ENCODE measurements at regions of chr17 and their contacts with region 1.

Region 1: GRCh38 chr17:77096570-77097214 is 44.1 kb upstream of the SEC14L1 start:
- DNase-seq: peak in 2 of 9 experiments; percentile 51 to 69
- ATAC-seq: peak; percentile 64
- H3K4me3 ChIP-seq: no peak overlapping the region
- H3K4me3 Mint-ChIP-seq: peak overlapping the region; percentile 13
- H3K27ac ChIP-seq: no peak overlapping the region
- H3K27ac Mint-ChIP-seq: peak overlapping the region; percentile 96
- H3K4me1 ChIP-seq: peaks cover 28% of the 10 kb centered on the region
- H3K4me1 Mint-ChIP-seq: peaks cover 44% of the 10 kb centered on the region
- H3K27me3 ChIP-seq: no peaks in the 10 kb centered on the region
- H3K27me3 Mint-ChIP-seq: no peaks in the 10 kb centered on the region
- CTCF ChIP-seq: peak; percentile 76

Region 2: GRCh38 chr17:77127735-77128361 is 31.2 kb after region 1 on chr17:
- CTCF ChIA-PET with region 1: no interaction called
- POLR2A ChIA-PET with region 1: no interaction called
- intact Hi-C with region 1: loop called in 1 of 2 experiments (anchors 2 kb)
- DNase-seq: peak; percentile 37 to 93 (median 73)
- ATAC-seq: peak; percentile 89
- H3K4me3 ChIP-seq: peak overlapping the region; percentile 35 to 38
- H3K4me3 Mint-ChIP-seq: peak overlapping the region; percentile 65
- H3K27ac ChIP-seq: peak overlapping the region; percentile 56 to 81
- H3K27ac Mint-ChIP-seq: peak overlapping the region; percentile 93
- H3K4me1 ChIP-seq: peaks cover 22% of the 10 kb centered on the region
- H3K4me1 Mint-ChIP-seq: peaks cover 23% of the 10 kb centered on the region
- H3K27me3 ChIP-seq: no peaks in the 10 kb centered on the region
- H3K27me3 Mint-ChIP-seq: no peaks in the 10 kb centered on the region
- CTCF ChIP-seq: no peak

Region 3: DNA sequence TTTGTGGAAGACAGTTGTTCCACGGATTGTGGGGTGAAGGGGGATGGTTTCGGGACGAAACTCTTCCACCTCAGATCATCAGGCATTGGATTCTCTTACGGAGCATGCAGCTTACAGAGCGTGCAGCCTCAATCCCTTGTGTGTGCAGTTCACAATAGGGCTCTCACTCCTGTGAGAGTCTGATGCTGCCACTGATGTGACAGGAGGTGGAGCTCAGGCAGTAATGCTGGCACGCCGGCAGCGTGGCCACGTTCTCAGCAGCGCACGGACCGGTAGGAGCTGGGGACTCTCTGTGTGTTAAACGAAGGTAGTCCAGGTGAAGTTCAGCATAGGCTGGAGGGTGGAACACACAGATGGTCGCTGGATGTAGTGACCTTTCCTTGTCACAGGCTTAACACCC is 81.9 kb after region 1 on chr17:
- CTCF ChIA-PET with region 1: no interaction called
- POLR2A ChIA-PET with region 1: no interaction called
- intact Hi-C with region 1: no loop called
- DNase-seq: no peak
- ATAC-seq: no peak
- H3K4me3 ChIP-seq: no peak overlapping the region
- H3K4me3 Mint-ChIP-seq: no peak overlapping the region
- H3K27ac ChIP-seq: no peak overlapping the region
- H3K27ac Mint-ChIP-seq: no peak overlapping the region
- H3K4me1 ChIP-seq: peaks cover 20% of the 10 kb centered on the region
- H3K4me1 Mint-ChIP-seq: peaks cover 50% of the 10 kb centered on the region
- H3K27me3 ChIP-seq: no peaks in the 10 kb centered on the region
- H3K27me3 Mint-ChIP-seq: no peaks in the 10 kb centered on the region
- CTCF ChIP-seq: no peak

Region 4: DNA sequence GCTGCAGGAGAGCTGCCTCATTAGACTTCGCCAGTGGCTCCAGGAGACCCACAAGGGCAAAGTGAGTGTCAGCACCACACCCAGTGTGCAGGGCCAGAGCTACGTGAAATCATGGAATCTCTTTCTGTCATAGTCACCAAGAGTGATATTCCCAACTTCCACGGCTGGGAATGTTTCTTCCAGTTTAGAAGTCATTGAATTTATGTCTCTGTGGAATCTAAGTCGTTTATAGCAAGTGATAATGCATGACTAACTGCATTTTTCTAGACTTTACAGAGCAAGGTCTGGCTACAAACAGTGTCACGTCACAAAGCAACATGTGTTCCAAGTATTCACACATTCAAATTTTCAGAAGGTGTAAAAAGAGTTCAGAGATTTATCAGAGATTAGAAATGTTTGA is 99.6 kb after region 1 on chr17:
- CTCF ChIA-PET with region 1: no interaction called
- POLR2A ChIA-PET with region 1: no interaction called
- intact Hi-C with region 1: loop called in 1 of 2 experiments (anchors 5 kb)
- DNase-seq: no peak
- ATAC-seq: no peak
- H3K4me3 ChIP-seq: no peak overlapping the region
- H3K4me3 Mint-ChIP-seq: no peak overlapping the region
- H3K27ac ChIP-seq: no peak overlapping the region
- H3K27ac Mint-ChIP-seq: no peak overlapping the region
- H3K4me1 ChIP-seq: no peaks in the 10 kb centered on the region
- H3K4me1 Mint-ChIP-seq: no peaks in the 10 kb centered on the region
- H3K27me3 ChIP-seq: no peaks in the 10 kb centered on the region
- H3K27me3 Mint-ChIP-seq: no peaks in the 10 kb centered on the region
- CTCF ChIP-seq: no peak

Region 5: DNA sequence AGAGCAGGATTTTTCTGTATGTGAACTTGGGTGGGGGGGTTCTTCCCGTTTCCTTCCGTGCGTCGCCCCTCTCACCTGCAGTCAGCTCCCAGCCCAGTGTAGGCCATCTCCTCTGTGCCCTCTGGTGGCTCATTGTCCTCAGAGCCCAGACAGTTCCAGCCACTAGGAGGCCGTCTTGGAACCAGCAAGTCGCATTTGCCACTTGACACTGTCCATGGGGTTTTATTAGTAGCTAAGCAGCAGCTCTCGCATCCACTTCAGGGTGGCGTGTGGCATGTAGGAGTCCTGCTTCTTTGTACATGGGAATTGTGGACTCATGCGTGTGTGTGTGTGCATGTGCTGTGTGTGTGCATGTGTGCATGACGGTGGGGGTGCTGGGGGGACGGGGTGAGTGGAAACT is 118.1 kb after region 1 on chr17:
- CTCF ChIA-PET with region 1: interaction called, 3 read pairs
- POLR2A ChIA-PET with region 1: no interaction called
- intact Hi-C with region 1: loop called in 1 of 2 experiments (anchors 1 kb)
- DNase-seq: peak in 4 of 9 experiments; percentile 21 to 47 (median 28)
- ATAC-seq: peak; percentile 55
- H3K4me3 ChIP-seq: no peak overlapping the region
- H3K4me3 Mint-ChIP-seq: no peak overlapping the region
- H3K27ac ChIP-seq: no peak overlapping the region
- H3K27ac Mint-ChIP-seq: no peak overlapping the region
- H3K4me1 ChIP-seq: no peaks in the 10 kb centered on the region
- H3K4me1 Mint-ChIP-seq: no peaks in the 10 kb centered on the region
- H3K27me3 ChIP-seq: no peaks in the 10 kb centered on the region
- H3K27me3 Mint-ChIP-seq: no peaks in the 10 kb centered on the region
- CTCF ChIP-seq: no peak

Region 6: GRCh38 chr17:77247048-77247541 is 150.4 kb after region 1 on chr17:
- CTCF ChIA-PET with region 1: interaction called, 3 read pairs
- POLR2A ChIA-PET with region 1: no interaction called
- intact Hi-C with region 1: loop called (anchors 1 to 2 kb)
- DNase-seq: peak; percentile 77 to 93 (median 85)
- ATAC-seq: peak; percentile 99
- H3K4me3 ChIP-seq: peak overlapping the region; percentile 37 to 55
- H3K4me3 Mint-ChIP-seq: peak overlapping the region; percentile 69
- H3K27ac ChIP-seq: no peak overlapping the region
- H3K27ac Mint-ChIP-seq: peak overlapping the region; percentile 27
- H3K4me1 ChIP-seq: peaks cover 11% of the 10 kb centered on the region
- H3K4me1 Mint-ChIP-seq: peaks cover 9% of the 10 kb centered on the region
- H3K27me3 ChIP-seq: no peaks in the 10 kb centered on the region
- H3K27me3 Mint-ChIP-seq: peaks cover 26% of the 10 kb centered on the region
- CTCF ChIP-seq: peak; percentile 97

Region 7: GRCh38 chr17:77331301-77331864 is 234.7 kb after region 1 on chr17:
- CTCF ChIA-PET with region 1: no interaction called
- POLR2A ChIA-PET with region 1: no interaction called
- intact Hi-C with region 1: no loop called
- DNase-seq: peak; percentile 90 to 99 (median 96)
- ATAC-seq: peak; percentile 79
- H3K4me3 ChIP-seq: peak overlapping the region; percentile 10 to 42
- H3K4me3 Mint-ChIP-seq: peak overlapping the region; percentile 79
- H3K27ac ChIP-seq: peak overlapping the region; percentile 32 to 56
- H3K27ac Mint-ChIP-seq: peak overlapping the region; percentile 90
- H3K4me1 ChIP-seq: peaks cover 41% of the 10 kb centered on the region
- H3K4me1 Mint-ChIP-seq: peaks cover 46% of the 10 kb centered on the region
- H3K27me3 ChIP-seq: no peaks in the 10 kb centered on the region
- H3K27me3 Mint-ChIP-seq: no peaks in the 10 kb centered on the region
- CTCF ChIP-seq: peak; percentile 87